ENCODE measurements at regions of chr6 and their contacts with region 1.

Region 1: GRCh38 chr6:78835817-78836216 is 31.5 kb upstream of the IRAK1BP1 start:
- DNase-seq: no peak
- ATAC-seq: no peak

Region 2: DNA sequence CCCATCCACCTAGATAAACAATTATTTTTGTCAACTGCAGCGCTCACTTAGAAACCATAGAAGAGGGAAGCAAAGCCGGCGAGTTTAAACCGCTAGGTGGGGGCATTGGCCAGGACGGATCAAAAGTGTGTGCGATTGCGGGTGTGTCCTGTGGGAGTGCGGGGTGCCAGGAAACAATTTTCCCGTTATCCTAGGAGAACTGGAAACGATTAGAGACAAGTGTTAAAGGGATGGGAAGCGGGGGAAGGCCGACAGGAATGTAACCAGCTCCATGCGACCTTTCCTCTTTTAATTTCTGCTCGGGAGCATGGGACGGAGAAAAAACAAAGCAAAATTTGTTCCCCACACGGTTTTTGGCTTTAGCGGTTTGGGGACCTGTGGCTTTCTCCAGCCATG is 1369.8 kb before region 1 on chr6:
- intact Hi-C with region 1: loop called in 1 of 2 experiments (anchors 10 kb)
- DNase-seq: peak; percentile 38
- ATAC-seq: peak; percentile 81 to 88

Measured in left cardiac atrium (tissue), 4 donors.